Caco-2 (cell line): ENCODE measurements at regions of chr4 and their contacts with region 1.

Region 1: DNA sequence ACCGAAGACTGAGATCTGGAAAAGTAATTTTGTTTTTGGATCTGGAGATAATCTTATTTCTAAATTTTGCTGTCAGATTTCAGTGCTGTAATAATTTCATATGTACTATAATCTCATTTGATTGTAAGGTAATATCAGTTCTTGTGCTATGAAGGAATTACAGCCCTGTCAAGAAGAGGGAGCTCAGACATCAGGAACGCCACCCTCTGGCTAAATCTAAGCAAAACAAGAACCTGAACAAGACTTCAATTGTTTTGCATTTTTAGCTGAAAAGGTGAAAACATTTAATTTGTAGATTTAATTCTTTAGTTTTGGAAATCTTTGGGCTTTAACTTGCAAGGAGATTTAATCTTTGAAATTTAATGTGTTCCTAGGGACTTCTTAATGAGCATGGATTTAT is 525.4 kb upstream of the HS3ST1 start:
- DNase-seq: no peak
- H3K4me3 ChIP-seq: no peak overlapping the region
- H3K4me3 Mint-ChIP-seq: no peak overlapping the region
- H3K27ac Mint-ChIP-seq: no peak overlapping the region
- H3K4me1 ChIP-seq: no peaks in the 10 kb centered on the region
- H3K4me1 Mint-ChIP-seq: no peaks in the 10 kb centered on the region
- H3K27me3 ChIP-seq: no peaks in the 10 kb centered on the region
- H3K27me3 Mint-ChIP-seq: no peaks in the 10 kb centered on the region
- CTCF ChIP-seq: no peak

Region 2: GRCh38 chr4:11765849-11766453 is 188.1 kb before region 1 on chr4:
- CTCF ChIA-PET with region 1: interaction called, 4 read pairs
- POLR2A ChIA-PET with region 1: no interaction called
- intact Hi-C with region 1: loop called (anchors 1 kb)
- DNase-seq: peak in 1 of 2 experiments; percentile 24
- H3K4me3 ChIP-seq: no peak overlapping the region
- H3K4me3 Mint-ChIP-seq: no peak overlapping the region
- H3K27ac Mint-ChIP-seq: no peak overlapping the region
- H3K4me1 ChIP-seq: no peaks in the 10 kb centered on the region
- H3K4me1 Mint-ChIP-seq: no peaks in the 10 kb centered on the region
- H3K27me3 ChIP-seq: no peaks in the 10 kb centered on the region
- H3K27me3 Mint-ChIP-seq: peaks cover 3% of the 10 kb centered on the region
- CTCF ChIP-seq: peak; percentile 64 to 71

Region 3: DNA sequence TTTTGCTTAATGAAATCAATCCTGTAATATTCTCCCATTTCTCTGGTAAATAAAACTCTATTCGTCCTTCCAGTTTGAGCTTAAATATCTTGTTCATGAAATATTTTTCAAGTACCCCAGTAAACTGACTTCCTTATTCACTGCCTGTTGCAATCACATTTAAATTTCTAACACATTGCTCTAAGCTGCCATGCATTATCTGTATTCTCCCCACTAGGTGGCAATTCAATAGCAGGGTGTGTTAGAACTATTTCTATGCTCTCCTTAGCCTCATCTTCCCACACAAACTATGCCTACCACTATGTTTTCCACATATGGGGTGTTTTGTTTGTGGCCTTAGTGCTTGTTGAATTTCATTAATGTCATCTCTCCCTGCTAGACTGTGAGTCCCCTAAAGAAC is 148.3 kb before region 1 on chr4:
- CTCF ChIA-PET with region 1: no interaction called
- POLR2A ChIA-PET with region 1: no interaction called
- intact Hi-C with region 1: loop called (anchors 2 kb)
- DNase-seq: peak in 1 of 2 experiments; percentile 7
- H3K4me3 ChIP-seq: no peak overlapping the region
- H3K4me3 Mint-ChIP-seq: no peak overlapping the region
- H3K27ac Mint-ChIP-seq: no peak overlapping the region
- H3K4me1 ChIP-seq: peaks cover 5% of the 10 kb centered on the region; the same call in 1 of the 2 replicates
- H3K4me1 Mint-ChIP-seq: no peaks in the 10 kb centered on the region
- H3K27me3 ChIP-seq: no peaks in the 10 kb centered on the region
- H3K27me3 Mint-ChIP-seq: no peaks in the 10 kb centered on the region
- CTCF ChIP-seq: peak in 1 of 2 experiments; percentile 40

Region 4: DNA sequence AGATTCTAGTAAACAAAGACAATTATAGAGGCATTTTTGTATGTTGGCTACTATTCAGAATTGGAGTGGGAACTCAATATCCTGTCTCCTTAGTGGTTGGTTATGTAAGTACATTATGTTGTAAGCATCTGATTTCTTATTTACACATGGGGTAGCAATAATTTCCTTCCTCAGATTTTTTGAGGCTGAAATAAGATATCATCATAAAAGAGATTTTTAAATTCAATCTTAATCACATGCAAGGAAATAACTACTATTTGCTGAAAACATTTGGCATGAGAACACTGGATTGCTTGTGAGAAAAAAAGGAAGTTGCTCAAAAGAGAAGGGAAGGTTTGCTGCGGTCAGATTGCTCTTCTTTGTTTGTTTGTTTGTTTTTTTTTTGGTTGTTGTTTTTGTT is 87.7 kb before region 1 on chr4:
- CTCF ChIA-PET with region 1: no interaction called
- POLR2A ChIA-PET with region 1: no interaction called
- intact Hi-C with region 1: no loop called
- DNase-seq: no peak
- H3K4me3 ChIP-seq: no peak overlapping the region
- H3K4me3 Mint-ChIP-seq: no peak overlapping the region
- H3K27ac Mint-ChIP-seq: no peak overlapping the region
- H3K4me1 ChIP-seq: peaks cover 4% of the 10 kb centered on the region; the same call in 1 of the 2 replicates
- H3K4me1 Mint-ChIP-seq: no peaks in the 10 kb centered on the region
- H3K27me3 ChIP-seq: no peaks in the 10 kb centered on the region
- H3K27me3 Mint-ChIP-seq: peaks cover 3% of the 10 kb centered on the region
- CTCF ChIP-seq: no peak

Region 5: GRCh38 chr4:12050357-12050756 is 96.3 kb after region 1 on chr4:
- CTCF ChIA-PET with region 1: no interaction called
- POLR2A ChIA-PET with region 1: no interaction called
- intact Hi-C with region 1: no loop called
- DNase-seq: no peak
- H3K4me3 ChIP-seq: no peak overlapping the region
- H3K4me3 Mint-ChIP-seq: no peak overlapping the region
- H3K27ac Mint-ChIP-seq: no peak overlapping the region
- H3K4me1 ChIP-seq: no peaks in the 10 kb centered on the region
- H3K4me1 Mint-ChIP-seq: no peaks in the 10 kb centered on the region
- H3K27me3 ChIP-seq: no peaks in the 10 kb centered on the region
- H3K27me3 Mint-ChIP-seq: no peaks in the 10 kb centered on the region
- CTCF ChIP-seq: no peak